SK-N-SH (cell line): ENCODE measurements at regions of chr6 and their contacts with region 1.

Region 1: GRCh38 chr6:130322673-130323268 is 43.0 kb upstream of the TMEM200A start:
- DNase-seq: peak; percentile 20
- H3K4me3 ChIP-seq: no peak overlapping the region; a peak in 1 of 4 replicates
- H3K27ac ChIP-seq: peak overlapping the region in 1 of 2 experiments; percentile 86; a peak in 1 of 4 replicates
- H3K4me1 ChIP-seq: peaks cover 0 to 4% of the 10 kb centered on the region in 2 experiments; a peak in 2 of 4 replicates
- H3K27me3 ChIP-seq: no peaks in the 10 kb centered on the region
- CTCF ChIP-seq: peak; percentile 98
- EP300 ChIP-seq: no peak
- RAD21 ChIP-seq: peak; percentile 80

Region 2: GRCh38 chr6:130288065-130288464 is 34.7 kb before region 1 on chr6:
- CTCF ChIA-PET with region 1: no interaction called
- POLR2A ChIA-PET with region 1: no interaction called
- DNase-seq: no peak
- H3K4me3 ChIP-seq: no peak overlapping the region
- H3K27ac ChIP-seq: peak overlapping the region in 1 of 2 experiments; percentile 29; a peak in 1 of 4 replicates
- H3K4me1 ChIP-seq: no peaks in the 10 kb centered on the region
- H3K27me3 ChIP-seq: no peaks in the 10 kb centered on the region
- CTCF ChIP-seq: no peak
- EP300 ChIP-seq: no peak
- RAD21 ChIP-seq: no peak

Region 3: GRCh38 chr6:130307752-130308361 is 14.9 kb before region 1 on chr6:
- CTCF ChIA-PET with region 1: interaction called, 17 read pairs
- POLR2A ChIA-PET with region 1: no interaction called
- DNase-seq: no peak
- H3K4me3 ChIP-seq: no peak overlapping the region
- H3K27ac ChIP-seq: peak overlapping the region; percentile 64 to 75
- H3K4me1 ChIP-seq: peaks cover 0 to 9% of the 10 kb centered on the region in 2 experiments; a peak in 1 of 4 replicates
- H3K27me3 ChIP-seq: no peaks in the 10 kb centered on the region
- CTCF ChIP-seq: no peak
- EP300 ChIP-seq: peak in 1 of 2 experiments; percentile 61; a peak in 1 of 4 replicates
- RAD21 ChIP-seq: no peak

Region 4: DNA sequence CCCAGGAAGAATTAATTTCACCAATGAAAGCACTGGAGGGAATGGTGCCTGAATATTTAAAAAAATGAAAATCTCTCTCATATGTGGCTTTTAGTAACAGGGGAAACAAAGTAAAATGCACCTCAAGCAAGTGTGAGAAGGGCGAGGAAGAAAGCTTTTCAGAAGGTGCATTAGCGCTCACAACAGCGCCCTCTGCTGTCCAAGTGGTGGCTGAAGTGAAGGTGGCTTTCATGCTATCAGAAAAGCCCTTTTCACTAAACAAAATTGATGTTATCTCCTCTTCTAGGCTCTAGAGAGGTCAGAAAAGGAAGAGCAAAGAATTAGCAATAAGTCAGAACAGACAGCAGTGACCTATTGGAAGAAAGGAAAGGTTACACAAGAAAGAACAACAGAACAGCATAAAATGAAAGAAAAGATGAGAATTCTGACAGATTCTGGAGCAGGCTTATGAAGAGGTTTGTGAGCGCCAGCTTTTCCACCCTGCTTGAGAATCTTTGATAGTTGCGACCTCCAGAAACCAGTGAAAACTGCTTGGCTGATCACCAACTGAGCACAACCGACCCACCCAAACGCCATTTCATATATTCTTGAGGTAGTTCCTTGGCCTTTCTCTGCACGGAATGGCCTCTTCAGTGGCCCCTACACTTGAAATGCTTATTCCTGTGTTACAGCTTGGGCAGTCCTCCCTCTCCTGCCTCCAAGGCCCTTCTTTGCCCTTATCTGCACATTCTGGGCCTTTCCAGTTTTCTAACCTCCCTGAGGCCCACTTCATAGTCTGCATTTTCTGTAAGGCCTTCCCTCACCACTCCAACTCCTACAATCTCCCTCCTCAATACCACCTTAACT is 549.7 kb after region 1 on chr6:
- CTCF ChIA-PET with region 1: interaction called, 17 read pairs
- POLR2A ChIA-PET with region 1: no interaction called
- DNase-seq: peak; percentile 15
- H3K4me3 ChIP-seq: peak overlapping the region in 1 of 2 experiments; percentile 24; a peak in 1 of 4 replicates
- H3K27ac ChIP-seq: no peak overlapping the region
- H3K4me1 ChIP-seq: no peaks in the 10 kb centered on the region
- H3K27me3 ChIP-seq: no peaks in the 10 kb centered on the region; the same call in 1 of the 2 replicates
- CTCF ChIP-seq: peak; percentile 97
- EP300 ChIP-seq: no peak
- RAD21 ChIP-seq: peak; percentile 62